ENCODE measurements at regions of chr17 and their contacts with region 1.

Region 1: DNA sequence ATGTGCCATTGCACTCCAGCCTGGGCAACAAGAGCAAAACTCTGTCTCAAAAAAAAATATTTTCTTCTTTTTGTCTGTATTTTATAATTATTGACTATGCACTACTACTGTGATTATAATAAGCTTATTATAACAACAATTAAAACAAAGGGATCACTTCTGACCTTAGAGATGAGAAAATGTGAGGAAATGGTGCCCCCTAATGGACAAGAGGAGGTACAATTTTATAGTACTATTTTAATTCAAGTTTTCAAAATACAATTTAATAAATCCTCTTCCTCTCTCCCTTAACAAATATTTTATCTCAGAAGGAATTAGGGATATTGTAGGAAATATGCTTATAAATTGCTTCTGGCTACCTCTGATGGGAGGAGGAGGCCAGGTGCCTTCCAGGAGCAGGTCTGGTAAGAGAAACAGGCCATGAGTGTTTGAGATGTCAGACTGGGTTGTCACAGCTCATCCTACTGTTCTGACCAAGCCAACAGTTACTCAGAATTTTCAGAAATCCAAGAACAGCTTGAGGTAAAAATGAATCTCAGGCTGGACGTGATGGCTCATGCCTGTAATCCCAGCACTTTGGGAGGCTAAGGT is 14.0 kb downstream of the VPS53 start:
- DNase-seq: no peak
- ATAC-seq: peak; percentile 66; the same call in 1 of the 2 replicates
- H3K4me3 ChIP-seq: no peak overlapping the region
- H3K27ac ChIP-seq: no peak overlapping the region
- H3K4me1 ChIP-seq: no peaks in the 10 kb centered on the region
- H3K27me3 ChIP-seq: no peaks in the 10 kb centered on the region
- CTCF ChIP-seq: peak; percentile 74

Region 2: GRCh38 chr17:266701-267667 is 433.6 kb before region 1 on chr17:
- CTCF ChIA-PET with region 1: interaction called, 13 read pairs
- POLR2A ChIA-PET with region 1: no interaction called
- in situ Hi-C with region 1: no loop called
- intact Hi-C with region 1: no loop called
- DNase-seq: no peak
- ATAC-seq: no peak
- H3K4me3 ChIP-seq: no peak overlapping the region
- H3K27ac ChIP-seq: no peak overlapping the region
- H3K4me1 ChIP-seq: no peaks in the 10 kb centered on the region
- H3K27me3 ChIP-seq: no peaks in the 10 kb centered on the region
- CTCF ChIP-seq: no peak

Region 3: GRCh38 chr17:520447-521182 is 180.0 kb before region 1 on chr17:
- CTCF ChIA-PET with region 1: no interaction called
- POLR2A ChIA-PET with region 1: no interaction called
- in situ Hi-C with region 1: no loop called
- intact Hi-C with region 1: no loop called
- DNase-seq: no peak
- ATAC-seq: no peak
- H3K4me3 ChIP-seq: no peak overlapping the region
- H3K27ac ChIP-seq: no peak overlapping the region
- H3K4me1 ChIP-seq: no peaks in the 10 kb centered on the region
- H3K27me3 ChIP-seq: no peaks in the 10 kb centered on the region
- CTCF ChIP-seq: no peak

Measured in Panc1 (cell line).